ENCODE measurements at regions of chr15 and their contacts with region 1.

Region 1: GRCh38 chr15:63218100-63218808 is 28.8 kb downstream of the RAB8B start:
- DNase-seq: no peak
- ATAC-seq: no peak
- H3K4me3 ChIP-seq: no peak overlapping the region
- H3K4me3 Mint-ChIP-seq: no peak overlapping the region
- H3K27ac ChIP-seq: no peak overlapping the region
- H3K27ac Mint-ChIP-seq: no peak overlapping the region
- H3K4me1 ChIP-seq: peaks cover 17% of the 10 kb centered on the region
- H3K4me1 Mint-ChIP-seq: peaks cover 69% of the 10 kb centered on the region
- H3K27me3 ChIP-seq: no peaks in the 10 kb centered on the region
- H3K27me3 Mint-ChIP-seq: no peaks in the 10 kb centered on the region
- CTCF ChIP-seq: no peak

Region 2: GRCh38 chr15:63232405-63232804 is 14.2 kb after region 1 on chr15:
- CTCF ChIA-PET with region 1: interaction called, 4 read pairs
- POLR2A ChIA-PET with region 1: interaction called, 10 read pairs
- intact Hi-C with region 1: loop called in 1 of 2 experiments (anchors 2 kb)
- DNase-seq: peak in 3 of 14 experiments; percentile 48 to 83 (median 50)
- ATAC-seq: peak; percentile 81
- H3K4me3 ChIP-seq: no peak overlapping the region
- H3K4me3 Mint-ChIP-seq: peak overlapping the region; percentile 28
- H3K27ac ChIP-seq: peak overlapping the region; percentile 16 to 60
- H3K27ac Mint-ChIP-seq: peak overlapping the region; percentile 85
- H3K4me1 ChIP-seq: peaks cover 27% of the 10 kb centered on the region
- H3K4me1 Mint-ChIP-seq: peaks cover 84% of the 10 kb centered on the region
- H3K27me3 ChIP-seq: no peaks in the 10 kb centered on the region
- H3K27me3 Mint-ChIP-seq: no peaks in the 10 kb centered on the region
- CTCF ChIP-seq: no peak

Measured in CD4-positive, alpha-beta T cell (primary cell).